Activated CD4-positive, alpha-beta T cell treated with anti-CD3 and anti-CD28 coated beads, Interleukin-2, amount 10 ng/mL, durations not matched to agents 24 days and 14 days (primary cell): ENCODE measurements at regions of chr21 and their contacts with region 1.

Region 1: GRCh38 chr21:33588485-33589335 is at the start of gene DONSON:
- DNase-seq: peak; percentile 98
- H3K4me3 Mint-ChIP-seq: peak within 1 kb of the TSS; percentile 96
- H3K27ac Mint-ChIP-seq: peak within 1 kb of the TSS; percentile 87
- H3K4me1 Mint-ChIP-seq: peaks cover 18% of the 10 kb centered on the region
- H3K27me3 Mint-ChIP-seq: no peaks in the 10 kb centered on the region
- total RNA-seq, gene DONSON: 42.6 and 42.7 TPM in 2 replicates

Region 2: GRCh38 chr21:33491373-33492102 is 97.2 kb before region 1 on chr21 and contains the start of gene DNAJC28:
- intact Hi-C with region 1: loop called (anchors 5 kb)
- DNase-seq: peak; percentile 98
- H3K4me3 Mint-ChIP-seq: peak within 1 kb of the TSS; percentile 84
- H3K27ac Mint-ChIP-seq: peak within 1 kb of the TSS; percentile 72
- H3K4me1 Mint-ChIP-seq: peaks cover 10% of the 10 kb centered on the region
- H3K27me3 Mint-ChIP-seq: peaks cover 18% of the 10 kb centered on the region
- total RNA-seq, gene DNAJC28: 0.09 and 0.12 TPM in 2 replicates

Region 3: GRCh38 chr21:33542640-33543504 is 45.8 kb before region 1 on chr21 and contains the start of gene SON:
- intact Hi-C with region 1: loop called (anchors 1 kb)
- DNase-seq: peak; percentile 99
- H3K4me3 Mint-ChIP-seq: peak within 1 kb of the TSS; percentile 95
- H3K27ac Mint-ChIP-seq: peak within 1 kb of the TSS; percentile 100
- H3K4me1 Mint-ChIP-seq: peaks cover 34% of the 10 kb centered on the region
- H3K27me3 Mint-ChIP-seq: no peaks in the 10 kb centered on the region
- total RNA-seq, gene SON: 351 and 363 TPM in 2 replicates

Region 4: DNA sequence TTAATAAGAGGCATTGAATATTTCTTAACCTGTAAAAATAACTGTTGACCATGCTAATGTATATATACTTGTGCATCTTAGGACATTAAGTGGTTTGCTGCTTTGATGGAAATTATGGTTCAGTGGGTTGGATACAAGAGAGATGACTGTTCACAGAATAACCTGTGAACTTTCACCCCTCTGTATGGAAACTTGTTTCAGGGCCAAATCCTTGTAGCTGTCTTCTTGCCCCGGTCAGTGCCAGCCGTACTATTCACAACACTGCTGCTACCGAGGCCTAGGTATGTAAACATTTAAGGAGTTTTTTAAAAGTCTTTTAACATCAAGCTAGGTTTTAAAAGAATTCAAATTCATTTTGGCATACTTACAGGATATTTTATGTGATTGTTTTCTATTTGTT is 16.4 kb before region 1 on chr21:
- intact Hi-C with region 1: loop called (anchors 2 kb)
- DNase-seq: no peak
- H3K4me3 Mint-ChIP-seq: no peak overlapping the region
- H3K27ac Mint-ChIP-seq: no peak overlapping the region
- H3K4me1 Mint-ChIP-seq: peaks cover 12% of the 10 kb centered on the region
- H3K27me3 Mint-ChIP-seq: no peaks in the 10 kb centered on the region